Activated naive CD4-positive, alpha-beta T cell treated with anti-CD3 and anti-CD28 coated beads for 36 hours (primary cell): ENCODE measurements at regions of chr13 and their contacts with region 1.

Region 1: DNA sequence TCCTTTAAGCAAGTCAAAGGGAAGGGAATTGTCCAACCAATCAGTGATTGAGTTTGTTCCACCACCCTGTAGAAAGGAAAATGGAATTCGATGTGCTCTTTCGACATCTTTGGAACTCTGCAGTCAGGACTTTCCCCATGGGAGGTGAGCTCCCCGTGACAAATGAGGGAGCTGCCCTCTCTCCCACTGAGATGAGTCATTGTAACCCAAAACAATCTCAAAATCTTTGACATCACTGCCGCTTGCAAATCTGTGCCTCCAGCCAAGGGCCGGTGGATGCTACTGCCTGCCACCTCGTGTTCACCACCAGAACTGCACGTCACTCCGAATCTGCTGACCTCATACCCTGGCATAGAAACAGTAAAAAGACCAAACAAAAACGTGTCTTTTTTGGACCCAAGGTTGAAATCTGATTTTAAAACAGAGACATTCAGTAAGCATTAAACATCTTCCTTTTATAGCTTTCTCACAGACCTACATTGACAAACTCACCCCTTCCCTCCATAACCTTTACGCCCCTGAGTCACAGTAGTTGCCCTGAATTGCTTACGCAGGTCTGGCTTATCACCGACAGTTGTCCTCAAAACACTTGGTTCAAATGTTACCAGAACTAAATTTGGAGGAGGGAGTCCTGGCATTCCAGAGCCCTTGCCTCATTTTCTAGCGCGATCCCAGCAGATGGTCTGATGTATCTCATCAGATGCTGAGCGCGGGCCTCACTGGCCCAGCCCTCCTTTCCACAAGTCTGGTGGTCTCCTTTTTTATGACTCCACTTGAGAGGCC is 105.2 kb downstream of the COL4A2 start:
- DNase-seq: peak; percentile 88
- H3K4me3 Mint-ChIP-seq: no peak overlapping the region
- H3K27ac Mint-ChIP-seq: no peak overlapping the region
- H3K4me1 Mint-ChIP-seq: peaks cover 7% of the 10 kb centered on the region
- H3K27me3 Mint-ChIP-seq: peaks cover 73% of the 10 kb centered on the region

Region 2: GRCh38 chr13:108961542-108962125 is 1450.7 kb before region 1 on chr13:
- CTCF ChIA-PET with region 1: no interaction called
- intact Hi-C with region 1: loop called (anchors 5 kb)
- DNase-seq: no peak
- H3K4me3 Mint-ChIP-seq: no peak overlapping the region
- H3K27ac Mint-ChIP-seq: no peak overlapping the region
- H3K4me1 Mint-ChIP-seq: no peaks in the 10 kb centered on the region
- H3K27me3 Mint-ChIP-seq: peaks cover 4% of the 10 kb centered on the region

Region 3: DNA sequence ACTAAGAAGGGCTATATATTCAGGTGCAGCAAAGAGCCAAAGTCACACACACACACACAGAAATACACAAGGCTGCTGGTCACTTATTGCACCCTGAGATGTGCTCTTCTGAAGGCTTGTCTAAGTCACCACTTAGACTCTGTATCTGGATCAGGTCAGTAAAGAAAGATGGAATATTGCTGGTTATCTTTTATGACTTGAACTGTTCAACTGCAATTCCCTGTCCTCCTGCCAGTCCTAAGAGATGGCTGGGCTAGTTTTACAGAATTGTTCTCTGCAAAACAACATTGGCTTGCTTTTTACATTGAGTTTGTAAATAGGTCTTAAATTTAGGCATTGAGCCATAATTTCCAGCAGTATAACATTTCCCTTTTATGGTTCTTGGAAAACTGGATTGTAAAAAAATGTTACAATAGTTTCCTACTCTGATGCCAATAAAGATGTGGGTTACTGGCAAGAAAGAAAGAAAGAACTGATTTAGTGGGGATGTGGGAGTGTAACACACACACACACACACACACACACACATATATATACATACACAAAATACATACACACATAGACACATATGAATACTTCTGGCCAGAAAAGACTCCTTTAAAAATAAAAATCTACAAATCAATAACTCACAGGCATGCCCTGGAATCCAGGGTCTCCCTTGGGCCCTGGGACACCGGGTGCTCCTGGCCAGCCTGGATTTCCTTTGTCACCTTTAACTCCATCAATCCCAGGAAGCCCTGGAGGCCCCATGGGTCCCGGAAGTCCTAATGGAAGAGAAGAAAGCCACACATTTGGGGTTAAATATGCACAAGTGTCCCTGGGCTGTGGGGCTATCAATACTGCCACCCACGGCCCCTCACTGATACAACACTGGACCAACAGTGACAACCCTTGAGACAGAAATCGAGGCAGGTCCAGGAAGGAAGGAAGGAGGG is 243.1 kb before region 1 on chr13:
- CTCF ChIA-PET with region 1: no interaction called
- intact Hi-C with region 1: no loop called
- DNase-seq: no peak
- H3K4me3 Mint-ChIP-seq: no peak overlapping the region
- H3K27ac Mint-ChIP-seq: no peak overlapping the region
- H3K4me1 Mint-ChIP-seq: no peaks in the 10 kb centered on the region
- H3K27me3 Mint-ChIP-seq: peaks cover 10% of the 10 kb centered on the region

Region 4: GRCh38 chr13:110218581-110219201 is 193.6 kb before region 1 on chr13:
- CTCF ChIA-PET with region 1: interaction called, 33 read pairs
- intact Hi-C with region 1: loop called (anchors 1 kb)
- DNase-seq: no peak
- H3K4me3 Mint-ChIP-seq: no peak overlapping the region
- H3K27ac Mint-ChIP-seq: no peak overlapping the region
- H3K4me1 Mint-ChIP-seq: no peaks in the 10 kb centered on the region
- H3K27me3 Mint-ChIP-seq: peaks cover 16% of the 10 kb centered on the region

Region 5: DNA sequence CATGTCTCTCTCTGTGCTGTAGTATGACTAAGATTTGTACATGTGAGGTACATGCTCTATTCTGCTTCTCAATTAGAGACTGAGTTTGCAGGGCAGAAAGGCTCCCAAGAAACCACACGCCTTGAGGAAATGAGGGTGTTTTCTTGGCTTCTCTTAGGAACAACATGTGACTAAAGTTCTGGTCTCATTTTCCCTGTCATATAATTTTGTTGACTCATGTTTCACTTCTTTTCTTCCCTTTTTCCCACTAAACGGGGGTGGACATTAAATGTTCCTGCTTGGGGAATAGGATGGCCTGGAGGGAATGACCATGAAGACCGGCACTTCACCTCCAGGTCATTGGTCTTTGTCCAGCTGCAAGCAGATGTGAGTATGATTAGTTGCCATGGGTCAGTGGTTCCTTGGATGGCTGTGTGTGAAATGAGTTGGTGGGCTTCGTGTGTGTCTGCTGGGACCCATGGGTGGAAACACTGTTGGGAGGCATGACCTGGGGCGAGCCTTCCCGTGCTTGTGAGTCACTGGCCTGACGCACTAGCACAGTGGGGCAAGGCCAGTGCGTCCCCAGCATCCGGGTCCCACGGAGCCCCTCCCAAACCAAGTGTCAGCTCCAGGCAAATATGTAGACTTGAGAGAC is 161.9 kb before region 1 on chr13:
- CTCF ChIA-PET with region 1: interaction called, 3 read pairs
- intact Hi-C with region 1: loop called (anchors 1 kb)
- DNase-seq: no peak
- H3K4me3 Mint-ChIP-seq: no peak overlapping the region
- H3K27ac Mint-ChIP-seq: no peak overlapping the region
- H3K4me1 Mint-ChIP-seq: no peaks in the 10 kb centered on the region
- H3K27me3 Mint-ChIP-seq: peaks cover 14% of the 10 kb centered on the region

Region 6: GRCh38 chr13:110340812-110341444 is 71.4 kb before region 1 on chr13:
- CTCF ChIA-PET with region 1: no interaction called
- intact Hi-C with region 1: loop called (anchors 1 kb)
- DNase-seq: peak; percentile 93
- H3K4me3 Mint-ChIP-seq: peak overlapping the region; percentile 23
- H3K27ac Mint-ChIP-seq: peak overlapping the region; percentile 68
- H3K4me1 Mint-ChIP-seq: peaks cover 32% of the 10 kb centered on the region
- H3K27me3 Mint-ChIP-seq: peaks cover 14% of the 10 kb centered on the region